ENCODE measurements at regions of chr1 and their contacts with region 1.

Region 1: GRCh38 chr1:66503841-66504470 is 30.0 kb upstream of the SGIP1 start:
- DNase-seq: peak; percentile 7 to 68
- H3K4me3 ChIP-seq: no peak overlapping the region
- H3K27ac ChIP-seq: no peak overlapping the region
- H3K4me1 ChIP-seq: no peaks in the 10 kb centered on the region
- H3K27me3 ChIP-seq: no peaks in the 10 kb centered on the region
- CTCF ChIP-seq: peak; percentile 50 to 86 (median 71)
- EP300 ChIP-seq: no peak
- POLR2A ChIP-seq: no peak
- RAD21 ChIP-seq: peak; percentile 81 to 90

Region 2: GRCh38 chr1:66262211-66262963 is 241.6 kb before region 1 on chr1:
- CTCF ChIA-PET with region 1: interaction called, 12 read pairs
- POLR2A ChIA-PET with region 1: no interaction called
- DNase-seq: no peak
- H3K4me3 ChIP-seq: no peak overlapping the region
- H3K27ac ChIP-seq: no peak overlapping the region
- H3K4me1 ChIP-seq: peaks cover 0 to 3% (median under 1%) of the 10 kb centered on the region in 4 experiments; a peak in 2 of 7 replicates
- H3K27me3 ChIP-seq: no peaks in the 10 kb centered on the region
- CTCF ChIP-seq: no peak
- EP300 ChIP-seq: no peak
- POLR2A ChIP-seq: no peak
- RAD21 ChIP-seq: no peak

Region 3: DNA sequence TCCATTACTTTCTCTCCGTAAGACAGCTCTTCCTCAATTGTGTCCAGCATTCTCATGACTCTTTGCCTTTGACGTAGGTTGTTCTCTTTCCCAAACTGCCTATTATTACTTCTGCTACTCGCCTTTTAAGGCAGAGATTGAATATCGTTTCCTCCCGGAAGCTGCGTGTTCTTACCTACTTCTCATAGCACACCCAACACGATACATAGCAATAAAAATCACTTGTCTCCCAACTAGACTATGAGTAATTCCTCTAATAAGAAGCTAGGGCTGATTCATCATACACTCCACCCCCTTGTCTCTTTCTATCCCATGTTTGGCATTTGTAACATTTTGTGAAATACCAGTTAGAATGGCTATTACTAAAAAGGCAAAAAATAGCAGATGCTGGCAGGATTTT is 25.8 kb before region 1 on chr1:
- CTCF ChIA-PET with region 1: interaction called, 14 read pairs
- POLR2A ChIA-PET with region 1: no interaction called
- DNase-seq: no peak
- H3K4me3 ChIP-seq: no peak overlapping the region
- H3K27ac ChIP-seq: no peak overlapping the region
- H3K4me1 ChIP-seq: no peaks in the 10 kb centered on the region
- H3K27me3 ChIP-seq: no peaks in the 10 kb centered on the region
- CTCF ChIP-seq: no peak
- EP300 ChIP-seq: no peak
- POLR2A ChIP-seq: no peak
- RAD21 ChIP-seq: no peak

Region 4: GRCh38 chr1:66575739-66576138 is 71.8 kb after region 1 on chr1:
- CTCF ChIA-PET with region 1: no interaction called
- POLR2A ChIA-PET with region 1: no interaction called
- DNase-seq: no peak
- H3K4me3 ChIP-seq: no peak overlapping the region
- H3K27ac ChIP-seq: no peak overlapping the region
- H3K4me1 ChIP-seq: peaks cover 0 to 3% (median 1%) of the 10 kb centered on the region in 4 experiments; a peak in 1 of 7 replicates
- H3K27me3 ChIP-seq: no peaks in the 10 kb centered on the region
- CTCF ChIP-seq: no peak
- EP300 ChIP-seq: no peak
- POLR2A ChIP-seq: no peak
- RAD21 ChIP-seq: no peak

Region 5: GRCh38 chr1:66671455-66671854 is 167.5 kb after region 1 on chr1:
- CTCF ChIA-PET with region 1: no interaction called
- POLR2A ChIA-PET with region 1: no interaction called
- DNase-seq: no peak
- H3K4me3 ChIP-seq: no peak overlapping the region
- H3K27ac ChIP-seq: no peak overlapping the region
- H3K4me1 ChIP-seq: no peaks in the 10 kb centered on the region
- H3K27me3 ChIP-seq: no peaks in the 10 kb centered on the region
- CTCF ChIP-seq: no peak
- EP300 ChIP-seq: no peak
- POLR2A ChIP-seq: no peak
- RAD21 ChIP-seq: no peak